ENCODE measurements at regions of chr14 and their contacts with region 1.

Region 1: GRCh38 chr14:74881431-74882361 is at the start of gene DLST:
- DNase-seq: peak; percentile 92
- ATAC-seq: peak; percentile 89
- H3K4me3 Mint-ChIP-seq: peak within 1 kb of the TSS; percentile 99
- H3K27ac Mint-ChIP-seq: peak within 1 kb of the TSS; percentile 96
- H3K4me1 Mint-ChIP-seq: peaks cover 64% of the 10 kb centered on the region
- H3K27me3 Mint-ChIP-seq: no peaks in the 10 kb centered on the region
- total RNA-seq, gene DLST: 103 to 120 TPM

Region 2: GRCh38 chr14:74841230-74842207 is 40.2 kb before region 1 on chr14:
- CTCF ChIA-PET with region 1: no interaction called
- POLR2A ChIA-PET with region 1: no interaction called
- intact Hi-C with region 1: loop called in 1 of 2 experiments (anchors 2 kb)
- DNase-seq: peak; percentile 49
- ATAC-seq: peak; percentile 81
- H3K4me3 Mint-ChIP-seq: peak overlapping the region; percentile 24
- H3K27ac Mint-ChIP-seq: peak overlapping the region; percentile 80
- H3K4me1 Mint-ChIP-seq: peaks cover 59% of the 10 kb centered on the region
- H3K27me3 Mint-ChIP-seq: no peaks in the 10 kb centered on the region

Region 3: GRCh38 chr14:74867673-74868072 is 14.0 kb before region 1 on chr14:
- CTCF ChIA-PET with region 1: interaction called, 17 read pairs
- POLR2A ChIA-PET with region 1: interaction called, 5 read pairs
- intact Hi-C with region 1: loop called in 1 of 2 experiments (anchors 2 kb)
- DNase-seq: peak; percentile 79
- ATAC-seq: peak; percentile 96
- H3K4me3 Mint-ChIP-seq: peak overlapping the region; percentile 3
- H3K27ac Mint-ChIP-seq: peak overlapping the region; percentile 14
- H3K4me1 Mint-ChIP-seq: peaks cover 19% of the 10 kb centered on the region
- H3K27me3 Mint-ChIP-seq: no peaks in the 10 kb centered on the region

Region 4: GRCh38 chr14:74922739-74923401 is 41.2 kb after region 1 on chr14 and contains the start of gene RPS6KL1:
- CTCF ChIA-PET with region 1: no interaction called
- POLR2A ChIA-PET with region 1: interaction called, 3 read pairs
- intact Hi-C with region 1: loop called in 1 of 2 experiments (anchors 1 kb)
- DNase-seq: peak; percentile 86
- ATAC-seq: peak; percentile 99
- H3K4me3 Mint-ChIP-seq: peak within 1 kb of the TSS; percentile 66
- H3K27ac Mint-ChIP-seq: peak within 1 kb of the TSS; percentile 39
- H3K4me1 Mint-ChIP-seq: peaks cover 10% of the 10 kb centered on the region
- H3K27me3 Mint-ChIP-seq: peaks cover 6% of the 10 kb centered on the region
- total RNA-seq, gene RPS6KL1: 5.6 to 6.0 TPM